ENCODE measurements at regions of chr21 and their contacts with region 1.

Region 1: GRCh38 chr21:17819114-17819876 is at the start of gene C21orf91:
- DNase-seq: peak; percentile 83
- ATAC-seq: peak; percentile 85
- H3K4me3 Mint-ChIP-seq: peak within 1 kb of the TSS; percentile 94
- H3K27ac Mint-ChIP-seq: peak within 1 kb of the TSS; percentile 100
- H3K4me1 Mint-ChIP-seq: peaks cover 40% of the 10 kb centered on the region
- H3K27me3 Mint-ChIP-seq: no peaks in the 10 kb centered on the region
- CTCF ChIP-seq: no peak
- total RNA-seq, gene C21orf91: 34.2 and 35.9 TPM in 2 replicates

Region 2: DNA sequence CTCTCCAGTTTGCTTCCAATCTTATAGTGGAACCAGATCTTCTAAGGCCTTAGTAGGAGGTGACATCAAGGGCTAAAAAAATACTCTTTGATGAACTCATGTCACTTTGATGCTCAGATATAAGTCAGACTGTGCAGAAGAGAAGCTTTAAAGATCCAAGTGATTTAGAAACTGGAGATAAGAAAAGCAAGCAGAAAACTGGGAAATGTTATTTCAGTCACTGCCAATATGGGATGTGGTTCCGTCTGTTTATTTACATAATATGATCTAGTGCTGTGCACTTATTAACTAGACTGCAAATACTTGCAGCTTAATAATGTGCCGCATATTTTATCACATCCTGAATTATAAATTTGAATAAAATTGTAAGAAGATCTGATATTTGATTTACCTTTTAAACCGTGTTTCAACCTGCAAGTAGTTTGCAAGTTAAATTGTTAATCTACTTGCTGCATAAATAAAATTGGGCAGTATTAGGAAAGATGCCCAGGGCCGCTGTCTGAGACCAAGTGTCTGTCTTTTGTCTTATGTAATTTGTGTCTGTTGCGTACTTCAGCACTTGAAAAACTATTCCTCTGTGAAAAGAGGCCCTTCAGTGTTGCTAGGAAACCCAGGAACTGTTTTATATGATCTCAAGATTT is 276.8 kb before region 1 on chr21:
- CTCF ChIA-PET with region 1: no interaction called
- POLR2A ChIA-PET with region 1: no interaction called
- intact Hi-C with region 1: no loop called
- DNase-seq: no peak
- ATAC-seq: no peak
- H3K4me3 Mint-ChIP-seq: no peak overlapping the region
- H3K27ac Mint-ChIP-seq: no peak overlapping the region
- H3K4me1 Mint-ChIP-seq: peaks cover 2% of the 10 kb centered on the region
- H3K27me3 Mint-ChIP-seq: peaks cover 16% of the 10 kb centered on the region
- CTCF ChIP-seq: no peak

Region 3: GRCh38 chr21:17611414-17612022 is 207.8 kb before region 1 on chr21:
- CTCF ChIA-PET with region 1: no interaction called
- POLR2A ChIA-PET with region 1: interaction called, 3 read pairs
- intact Hi-C with region 1: loop called (anchors 1 kb)
- DNase-seq: peak; percentile 62
- ATAC-seq: peak; percentile 47
- H3K4me3 Mint-ChIP-seq: peak overlapping the region; percentile 93
- H3K27ac Mint-ChIP-seq: peak overlapping the region; percentile 94
- H3K4me1 Mint-ChIP-seq: peaks cover 18% of the 10 kb centered on the region
- H3K27me3 Mint-ChIP-seq: no peaks in the 10 kb centered on the region
- CTCF ChIP-seq: no peak

Region 4: GRCh38 chr21:17726047-17726830 is 93.1 kb before region 1 on chr21:
- CTCF ChIA-PET with region 1: no interaction called
- POLR2A ChIA-PET with region 1: no interaction called
- intact Hi-C with region 1: loop called (anchors 5 kb)
- DNase-seq: no peak
- ATAC-seq: no peak
- H3K4me3 Mint-ChIP-seq: no peak overlapping the region
- H3K27ac Mint-ChIP-seq: no peak overlapping the region
- H3K4me1 Mint-ChIP-seq: no peaks in the 10 kb centered on the region
- H3K27me3 Mint-ChIP-seq: no peaks in the 10 kb centered on the region
- CTCF ChIP-seq: no peak

Region 5: DNA sequence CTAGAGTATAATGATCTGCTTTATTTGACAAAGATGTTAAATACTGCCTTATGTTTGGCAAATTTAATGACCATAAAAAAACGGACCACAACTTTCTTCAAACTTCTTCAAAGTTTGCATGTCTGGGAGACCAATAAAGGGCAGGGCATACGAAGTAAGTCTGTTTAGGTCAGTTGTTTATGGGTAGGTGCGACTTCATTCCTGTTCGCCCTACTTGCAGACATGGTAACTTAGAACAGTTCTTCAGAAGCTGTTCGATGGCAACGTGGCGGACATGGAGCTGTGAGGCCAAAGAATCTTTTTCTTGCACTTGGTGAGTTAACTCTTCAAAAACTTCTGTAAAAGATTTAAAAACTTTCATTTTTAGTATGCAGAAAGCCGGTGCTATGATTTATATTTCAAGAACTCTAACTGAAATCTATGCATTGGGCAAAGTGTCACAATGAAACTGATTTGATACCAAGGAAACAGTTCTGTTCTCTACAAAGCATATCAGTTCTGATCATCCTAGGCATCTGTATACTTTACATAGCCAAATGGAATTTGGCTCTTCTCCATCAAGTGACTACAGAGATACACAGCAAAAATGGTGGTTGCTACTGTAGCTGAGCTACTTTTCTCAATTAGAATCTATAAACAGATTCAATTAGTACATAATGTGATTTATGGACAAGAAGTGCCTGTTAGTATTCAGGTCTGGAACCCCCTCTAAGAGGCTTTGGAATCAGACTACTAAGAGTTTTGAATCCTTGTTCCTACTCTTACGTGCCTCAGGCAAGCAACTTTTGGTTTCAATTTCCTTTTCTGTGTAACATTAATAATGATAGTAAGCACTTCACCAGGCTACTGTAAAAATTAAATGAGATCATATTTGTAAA is 25.8 kb before region 1 on chr21:
- CTCF ChIA-PET with region 1: interaction called, 3 read pairs
- POLR2A ChIA-PET with region 1: interaction called, 22 read pairs
- intact Hi-C with region 1: loop called (anchors 1 kb)
- DNase-seq: no peak
- ATAC-seq: peak; percentile 72
- H3K4me3 Mint-ChIP-seq: peak overlapping the region; percentile 56
- H3K27ac Mint-ChIP-seq: peak overlapping the region; percentile 53
- H3K4me1 Mint-ChIP-seq: peaks cover 57% of the 10 kb centered on the region
- H3K27me3 Mint-ChIP-seq: no peaks in the 10 kb centered on the region
- CTCF ChIP-seq: no peak

Region 6: GRCh38 chr21:17805966-17806365 is 13.3 kb before region 1 on chr21:
- CTCF ChIA-PET with region 1: interaction called, 3 read pairs
- POLR2A ChIA-PET with region 1: interaction called, 8 read pairs
- intact Hi-C with region 1: loop called (anchors 2 kb)
- DNase-seq: no peak
- ATAC-seq: no peak
- H3K4me3 Mint-ChIP-seq: no peak overlapping the region
- H3K27ac Mint-ChIP-seq: no peak overlapping the region
- H3K4me1 Mint-ChIP-seq: peaks cover 19% of the 10 kb centered on the region
- H3K27me3 Mint-ChIP-seq: no peaks in the 10 kb centered on the region
- CTCF ChIP-seq: no peak

Region 7: GRCh38 chr21:17834639-17835354 is 15.5 kb after region 1 on chr21:
- CTCF ChIA-PET with region 1: no interaction called
- POLR2A ChIA-PET with region 1: interaction called, 27 read pairs
- intact Hi-C with region 1: loop called (anchors 1 kb)
- DNase-seq: no peak
- ATAC-seq: peak; percentile 75
- H3K4me3 Mint-ChIP-seq: peak overlapping the region; percentile 16
- H3K27ac Mint-ChIP-seq: peak overlapping the region; percentile 30
- H3K4me1 Mint-ChIP-seq: peaks cover 16% of the 10 kb centered on the region
- H3K27me3 Mint-ChIP-seq: no peaks in the 10 kb centered on the region
- CTCF ChIP-seq: no peak

Region 8: DNA sequence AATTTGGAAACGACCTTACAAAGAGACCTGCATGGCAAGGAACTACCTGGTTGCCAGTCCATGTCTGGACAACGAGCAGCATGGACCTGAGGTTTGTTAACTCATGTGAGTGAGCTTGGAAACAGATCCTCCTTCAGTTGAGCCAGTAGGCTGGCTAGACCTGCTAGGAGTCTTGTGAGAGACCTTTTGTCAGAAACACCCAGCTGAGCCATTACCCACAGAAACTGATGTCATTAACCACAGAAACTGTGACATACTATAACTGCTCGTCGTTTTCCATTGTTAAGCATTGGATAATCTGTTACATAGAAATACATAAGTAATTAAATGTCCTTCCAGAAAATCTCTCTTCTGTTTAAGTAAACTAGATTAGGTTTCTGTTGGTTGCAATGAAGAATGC is 211.0 kb after region 1 on chr21:
- CTCF ChIA-PET with region 1: no interaction called
- POLR2A ChIA-PET with region 1: no interaction called
- intact Hi-C with region 1: no loop called
- DNase-seq: no peak
- ATAC-seq: no peak
- H3K4me3 Mint-ChIP-seq: no peak overlapping the region
- H3K27ac Mint-ChIP-seq: no peak overlapping the region
- H3K4me1 Mint-ChIP-seq: no peaks in the 10 kb centered on the region
- H3K27me3 Mint-ChIP-seq: no peaks in the 10 kb centered on the region
- CTCF ChIP-seq: no peak